Psoas muscle (tissue), 8 donors: ENCODE measurements at regions of chr12 and their contacts with region 1.

Region 1: GRCh38 chr12:110826592-110827200 is 20.1 kb upstream of the CCDC63 start:
- DNase-seq: peak; percentile 86 to 92
- ATAC-seq: peak; percentile 90 to 99 (median 96)
- H3K4me3 ChIP-seq: peak overlapping the region; percentile 42
- H3K27ac ChIP-seq: no peak overlapping the region
- H3K4me1 ChIP-seq: no peaks in the 10 kb centered on the region
- H3K27me3 ChIP-seq: no peaks in the 10 kb centered on the region
- CTCF ChIP-seq: peak; percentile 72

Region 2: GRCh38 chr12:110513842-110514241 is 312.9 kb before region 1 on chr12:
- intact Hi-C with region 1: loop called in 1 of 2 experiments (anchors 10 kb)
- DNase-seq: no peak
- ATAC-seq: no peak
- H3K4me3 ChIP-seq: no peak overlapping the region
- H3K27ac ChIP-seq: no peak overlapping the region
- H3K4me1 ChIP-seq: no peaks in the 10 kb centered on the region
- H3K27me3 ChIP-seq: no peaks in the 10 kb centered on the region
- CTCF ChIP-seq: no peak

Region 3: GRCh38 chr12:110893956-110894355 is 67.3 kb after region 1 on chr12:
- intact Hi-C with region 1: loop called in 1 of 2 experiments (anchors 5 kb)
- DNase-seq: no peak
- ATAC-seq: no peak
- H3K4me3 ChIP-seq: no peak overlapping the region
- H3K27ac ChIP-seq: no peak overlapping the region
- H3K4me1 ChIP-seq: no peaks in the 10 kb centered on the region
- H3K27me3 ChIP-seq: no peaks in the 10 kb centered on the region
- CTCF ChIP-seq: no peak